ENCODE measurements at regions of chr3 and their contacts with region 1.

Region 1: GRCh38 chr3:182683453-182683852 is 109.9 kb upstream of the ATP11B start:
- DNase-seq: no peak
- ATAC-seq: peak; percentile 87

Region 2: GRCh38 chr3:181210275-181210674 is 1473.2 kb before region 1 on chr3:
- intact Hi-C with region 1: loop called (anchors 5 kb)
- DNase-seq: no peak
- ATAC-seq: no peak

Region 3: GRCh38 chr3:181709537-181710279 is 973.7 kb before region 1 on chr3:
- intact Hi-C with region 1: loop called (anchors 2 kb)
- DNase-seq: no peak
- ATAC-seq: no peak

Region 4: DNA sequence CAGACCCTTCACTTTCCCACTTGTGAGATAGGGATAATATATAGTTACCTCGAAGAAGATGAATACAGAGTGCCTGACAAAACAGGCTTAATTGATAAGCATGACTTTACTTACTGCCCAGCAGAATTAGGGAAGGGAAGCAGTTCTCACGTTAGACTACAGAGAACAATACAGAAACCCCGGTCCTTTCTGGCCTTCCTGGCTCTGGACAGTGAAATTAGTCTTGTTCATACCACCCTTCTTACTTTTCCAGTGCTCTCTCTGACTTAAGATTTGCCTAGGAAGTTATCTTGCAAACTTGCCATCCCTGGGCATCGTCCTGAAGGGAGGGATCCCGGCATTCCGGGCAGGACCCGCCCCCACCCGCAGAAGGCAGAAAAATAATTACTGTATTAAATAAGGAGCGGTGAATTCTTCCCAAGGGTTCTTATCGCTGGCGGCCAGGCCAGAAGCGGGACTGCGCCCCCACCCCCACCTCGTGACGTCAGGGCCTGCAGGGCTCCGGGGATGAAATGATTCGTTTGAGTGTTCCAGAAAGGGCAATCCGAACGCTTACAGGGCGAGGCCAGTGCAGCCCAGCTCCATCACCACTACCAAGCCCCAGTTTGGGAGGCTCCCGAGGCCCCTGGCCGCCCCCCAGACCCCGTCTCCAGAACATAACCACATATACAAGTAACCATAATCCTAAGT is 963.3 kb before region 1 on chr3:
- intact Hi-C with region 1: loop called (anchors 5 kb)
- DNase-seq: no peak
- ATAC-seq: no peak